Activated CD4-positive, alpha-beta memory T cell treated with anti-CD3 and anti-CD28 coated beads for 36 hours (primary cell): ENCODE measurements at regions of chr5 and their contacts with region 1.

Region 1: GRCh38 chr5:132753135-132753987 is 6.1 kb downstream of the CCNI2 start:
- DNase-seq: peak; percentile 47
- H3K4me3 Mint-ChIP-seq: no peak overlapping the region
- H3K27ac Mint-ChIP-seq: no peak overlapping the region
- H3K4me1 Mint-ChIP-seq: peaks cover 38% of the 10 kb centered on the region
- H3K27me3 Mint-ChIP-seq: no peaks in the 10 kb centered on the region

Region 2: GRCh38 chr5:132777209-132778069 is 24.1 kb after region 1 on chr5 and contains the start of gene SEPTIN8:
- CTCF ChIA-PET with region 1: interaction called, 4 read pairs
- POLR2A ChIA-PET with region 1: no interaction called
- intact Hi-C with region 1: loop called (anchors 2 kb)
- DNase-seq: peak; percentile 62
- H3K4me3 Mint-ChIP-seq: peak within 1 kb of the TSS; percentile 68
- H3K27ac Mint-ChIP-seq: no peak within 1 kb of the TSS
- H3K4me1 Mint-ChIP-seq: peaks cover 2% of the 10 kb centered on the region
- H3K27me3 Mint-ChIP-seq: peaks cover 13% of the 10 kb centered on the region
- total RNA-seq, gene SEPTIN8: 31.1 to 32.8 TPM

Region 3: DNA sequence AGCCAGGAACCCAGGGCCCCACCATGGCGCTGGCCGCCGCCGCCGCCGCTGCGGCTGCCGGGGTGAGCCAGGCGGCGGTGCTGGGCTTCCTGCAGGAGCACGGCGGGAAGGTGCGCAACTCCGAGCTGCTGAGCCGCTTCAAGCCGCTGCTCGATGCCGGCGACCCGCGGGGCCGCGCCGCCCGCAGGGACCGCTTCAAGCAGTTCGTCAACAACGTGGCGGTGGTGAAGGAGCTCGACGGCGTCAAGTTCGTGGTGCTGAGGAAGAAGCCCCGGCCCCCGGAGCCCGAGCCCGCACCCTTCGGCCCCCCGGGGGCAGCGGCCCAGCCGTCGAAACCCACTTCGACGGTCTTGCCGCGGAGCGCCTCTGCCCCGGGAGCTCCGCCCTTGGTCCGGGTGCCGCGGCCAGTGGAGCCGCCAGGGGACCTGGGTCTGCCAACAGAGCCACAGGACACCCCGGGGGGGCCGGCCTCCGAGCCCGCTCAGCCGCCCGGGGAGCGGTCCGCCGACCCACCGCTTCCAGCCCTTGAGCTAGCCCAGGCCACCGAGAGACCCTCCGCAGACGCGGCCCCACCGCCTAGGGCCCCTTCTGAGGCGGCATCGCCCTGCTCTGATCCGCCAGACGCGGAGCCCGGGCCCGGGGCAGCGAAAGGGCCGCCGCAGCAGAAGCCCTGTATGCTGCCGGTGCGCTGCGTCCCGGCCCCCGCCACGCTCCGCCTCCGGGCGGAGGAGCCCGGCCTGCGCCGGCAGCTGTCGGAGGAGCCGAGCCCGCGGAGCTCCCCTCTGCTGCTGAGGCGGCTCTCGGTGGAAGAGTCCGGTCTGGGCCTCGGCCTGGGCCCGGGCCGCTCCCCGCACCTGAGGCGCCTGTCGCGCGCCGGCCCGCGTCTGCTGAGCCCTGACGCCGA is 60.5 kb after region 1 on chr5:
- CTCF ChIA-PET with region 1: interaction called, 11 read pairs
- POLR2A ChIA-PET with region 1: no interaction called
- intact Hi-C with region 1: no loop called
- DNase-seq: peak; percentile 45
- H3K4me3 Mint-ChIP-seq: no peak overlapping the region
- H3K27ac Mint-ChIP-seq: no peak overlapping the region
- H3K4me1 Mint-ChIP-seq: peaks cover 12% of the 10 kb centered on the region
- H3K27me3 Mint-ChIP-seq: peaks cover 31% of the 10 kb centered on the region

Region 4: DNA sequence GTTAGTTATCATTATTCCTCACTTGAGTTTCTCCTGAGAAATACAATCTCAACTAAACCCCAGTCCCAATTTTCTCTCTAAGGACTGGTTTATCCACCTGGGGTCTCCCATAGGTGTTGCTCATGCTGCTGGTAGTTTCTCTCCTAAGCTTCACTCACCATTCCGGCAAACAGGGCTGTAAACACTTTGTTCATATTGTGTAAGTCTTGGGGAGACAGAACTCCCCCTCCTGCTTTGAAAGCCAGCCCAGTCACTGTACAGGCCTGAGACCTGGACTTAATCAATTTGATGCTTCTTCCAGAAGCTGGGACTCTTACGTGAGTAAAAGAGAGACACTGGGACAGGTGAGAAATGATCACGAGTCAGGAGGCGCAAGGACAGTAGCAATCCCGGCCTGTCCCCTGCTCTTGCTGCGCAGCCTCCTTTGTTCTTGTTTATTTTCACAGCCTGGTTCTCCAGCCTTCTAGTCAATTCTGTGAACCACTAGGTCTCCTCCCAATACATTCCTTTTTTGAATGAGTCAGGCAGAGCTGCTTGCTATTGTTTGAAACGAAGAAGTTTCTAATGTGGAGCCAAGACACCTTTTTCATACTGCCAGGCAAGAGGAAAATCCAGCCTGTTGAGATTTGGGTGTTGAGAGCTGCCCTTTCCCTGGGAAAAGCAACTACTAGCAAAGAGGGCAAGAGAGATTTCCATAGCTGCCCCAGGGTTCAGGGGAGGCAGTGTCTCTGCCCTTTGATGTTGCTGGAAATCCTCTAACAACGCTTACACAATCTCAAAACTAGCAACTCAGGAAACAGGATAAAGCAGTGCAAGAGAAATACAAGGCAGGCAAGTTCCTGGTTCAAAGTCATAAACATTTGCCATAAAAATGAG is 86.3 kb after region 1 on chr5:
- CTCF ChIA-PET with region 1: no interaction called
- POLR2A ChIA-PET with region 1: no interaction called
- intact Hi-C with region 1: no loop called
- DNase-seq: no peak
- H3K4me3 Mint-ChIP-seq: no peak overlapping the region
- H3K27ac Mint-ChIP-seq: no peak overlapping the region
- H3K4me1 Mint-ChIP-seq: no peaks in the 10 kb centered on the region
- H3K27me3 Mint-ChIP-seq: no peaks in the 10 kb centered on the region

Region 5: DNA sequence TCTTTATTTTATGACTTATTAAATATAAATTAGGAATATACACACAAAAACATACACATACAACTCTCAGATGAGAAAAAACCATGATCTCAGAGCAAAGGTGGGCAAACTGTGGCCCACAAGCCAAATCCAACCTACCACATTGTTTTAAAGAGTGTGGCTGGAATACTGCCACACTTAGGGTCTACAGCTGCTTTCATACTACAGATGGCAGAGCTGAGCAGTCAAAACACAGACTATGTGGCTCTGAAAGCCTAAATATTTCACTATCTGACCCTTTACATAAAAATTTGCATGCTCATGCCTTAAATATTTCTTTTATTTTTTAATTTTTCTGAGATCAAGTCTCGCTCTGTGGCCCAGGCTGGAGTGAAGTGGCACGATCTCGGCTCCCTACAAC is 148.4 kb after region 1 on chr5:
- CTCF ChIA-PET with region 1: no interaction called
- POLR2A ChIA-PET with region 1: no interaction called
- intact Hi-C with region 1: no loop called
- DNase-seq: no peak
- H3K4me3 Mint-ChIP-seq: no peak overlapping the region
- H3K27ac Mint-ChIP-seq: no peak overlapping the region
- H3K4me1 Mint-ChIP-seq: peaks cover 9% of the 10 kb centered on the region
- H3K27me3 Mint-ChIP-seq: no peaks in the 10 kb centered on the region